ENCODE measurements at regions of chr15 and their contacts with region 1.

Region 1: GRCh38 chr15:89358755-89359439 is 24.3 kb upstream of the POLG start:
- DNase-seq: peak; percentile 58 to 92 (median 77)
- ATAC-seq: peak; percentile 89
- H3K4me3 ChIP-seq: peak overlapping the region; percentile 54
- H3K4me3 Mint-ChIP-seq: peak overlapping the region; percentile 80
- H3K27ac ChIP-seq: no peak overlapping the region
- H3K27ac Mint-ChIP-seq: no peak overlapping the region
- H3K4me1 ChIP-seq: peaks cover 37% of the 10 kb centered on the region
- H3K4me1 Mint-ChIP-seq: peaks cover 8% of the 10 kb centered on the region
- H3K27me3 ChIP-seq: peaks cover 82 to 92% of the 10 kb centered on the region in 2 experiments
- H3K27me3 Mint-ChIP-seq: peaks cover 83% of the 10 kb centered on the region
- CTCF ChIP-seq: peak; percentile 99

Region 2: DNA sequence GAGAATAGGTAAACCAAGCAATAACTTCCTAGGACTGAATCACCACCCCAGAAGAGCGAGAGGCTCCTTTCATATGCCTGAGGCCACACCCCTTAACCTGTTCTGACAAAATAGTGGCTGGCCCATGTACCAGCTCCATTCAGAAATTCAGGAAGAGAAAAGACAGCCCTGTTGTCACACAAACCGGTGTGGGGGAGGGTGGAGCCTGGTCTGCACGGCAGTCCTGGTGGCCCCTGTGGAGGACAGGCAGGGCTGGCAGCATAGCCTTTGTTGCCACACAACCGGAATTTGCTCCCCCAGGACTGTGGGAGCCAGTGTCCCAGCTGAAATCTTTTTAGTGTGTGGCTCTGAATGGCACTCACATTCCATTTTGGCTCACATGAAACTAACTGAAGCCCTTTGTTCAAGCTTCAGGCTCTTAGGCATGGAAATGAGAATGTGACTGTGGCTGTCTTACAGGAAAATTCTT is 161.4 kb before region 1 on chr15:
- CTCF ChIA-PET with region 1: no interaction called
- POLR2A ChIA-PET with region 1: no interaction called
- intact Hi-C with region 1: no loop called
- DNase-seq: no peak
- ATAC-seq: no peak
- H3K4me3 ChIP-seq: no peak overlapping the region
- H3K4me3 Mint-ChIP-seq: no peak overlapping the region
- H3K27ac ChIP-seq: no peak overlapping the region
- H3K27ac Mint-ChIP-seq: no peak overlapping the region
- H3K4me1 ChIP-seq: no peaks in the 10 kb centered on the region
- H3K4me1 Mint-ChIP-seq: no peaks in the 10 kb centered on the region
- H3K27me3 ChIP-seq: no peaks in the 10 kb centered on the region
- H3K27me3 Mint-ChIP-seq: no peaks in the 10 kb centered on the region
- CTCF ChIP-seq: no peak

Region 3: GRCh38 chr15:89299896-89300295 is 59.0 kb before region 1 on chr15:
- CTCF ChIA-PET with region 1: no interaction called
- POLR2A ChIA-PET with region 1: no interaction called
- intact Hi-C with region 1: no loop called
- DNase-seq: no peak
- ATAC-seq: no peak
- H3K4me3 ChIP-seq: no peak overlapping the region
- H3K4me3 Mint-ChIP-seq: no peak overlapping the region
- H3K27ac ChIP-seq: no peak overlapping the region
- H3K27ac Mint-ChIP-seq: no peak overlapping the region
- H3K4me1 ChIP-seq: no peaks in the 10 kb centered on the region
- H3K4me1 Mint-ChIP-seq: no peaks in the 10 kb centered on the region
- H3K27me3 ChIP-seq: no peaks in the 10 kb centered on the region
- H3K27me3 Mint-ChIP-seq: no peaks in the 10 kb centered on the region
- CTCF ChIP-seq: no peak

Region 4: DNA sequence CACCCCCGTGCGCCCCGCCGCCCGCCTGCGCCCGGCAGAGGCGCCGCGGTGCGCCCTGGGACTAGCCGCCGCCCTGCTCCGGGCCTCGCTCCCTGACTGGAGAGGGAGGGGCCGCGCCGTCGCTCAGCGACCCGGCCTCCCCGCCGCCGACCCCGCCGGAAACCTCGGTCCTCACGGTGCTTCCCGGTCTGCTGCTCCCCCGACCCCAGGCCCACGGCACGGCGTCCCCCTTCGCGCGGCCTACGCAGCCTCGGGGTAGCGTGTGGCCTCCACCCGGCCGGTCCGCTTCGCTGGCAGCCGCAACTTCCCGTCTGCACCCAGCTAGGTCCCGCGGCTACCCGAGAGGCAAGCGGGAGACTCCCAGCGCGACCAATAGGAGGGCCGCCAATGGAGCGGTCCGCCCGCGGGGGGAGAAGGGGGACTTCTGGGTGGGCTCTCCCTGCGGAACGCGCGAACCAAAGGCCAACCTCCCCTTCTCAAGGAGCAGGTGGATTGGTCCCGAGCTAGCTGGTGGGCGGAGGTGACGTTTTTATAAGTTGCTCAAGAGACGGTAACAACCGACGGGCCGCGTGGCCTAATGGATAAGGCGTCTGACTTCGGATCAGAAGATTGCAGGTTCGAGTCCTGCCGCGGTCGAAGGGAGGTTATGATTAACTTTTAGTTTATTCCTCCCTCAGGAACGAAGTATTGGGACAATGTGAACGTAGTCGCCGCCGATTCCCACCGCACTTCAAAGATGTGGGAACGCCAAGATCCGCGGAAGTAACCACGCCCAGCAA is 24.2 kb before region 1 on chr15 and contains the start of gene POLG:
- CTCF ChIA-PET with region 1: interaction called, 22 read pairs
- POLR2A ChIA-PET with region 1: interaction called, 9 read pairs
- intact Hi-C with region 1: loop called in 1 of 2 experiments (anchors 1 kb)
- DNase-seq: peak; percentile 98 to 100 (median 99)
- ATAC-seq: peak; percentile 91
- H3K4me3 ChIP-seq: peak within 1 kb of the TSS; percentile 92
- H3K4me3 Mint-ChIP-seq: peak within 1 kb of the TSS; percentile 96
- H3K27ac ChIP-seq: peak within 1 kb of the TSS; percentile 55 to 79
- H3K27ac Mint-ChIP-seq: peak within 1 kb of the TSS; percentile 100
- H3K4me1 ChIP-seq: peaks cover 54% of the 10 kb centered on the region
- H3K4me1 Mint-ChIP-seq: peaks cover 56% of the 10 kb centered on the region
- H3K27me3 ChIP-seq: no peaks in the 10 kb centered on the region
- H3K27me3 Mint-ChIP-seq: peaks cover 11% of the 10 kb centered on the region
- CTCF ChIP-seq: no peak
- total RNA-seq, gene POLG: 139 to 140 TPM

Region 5: DNA sequence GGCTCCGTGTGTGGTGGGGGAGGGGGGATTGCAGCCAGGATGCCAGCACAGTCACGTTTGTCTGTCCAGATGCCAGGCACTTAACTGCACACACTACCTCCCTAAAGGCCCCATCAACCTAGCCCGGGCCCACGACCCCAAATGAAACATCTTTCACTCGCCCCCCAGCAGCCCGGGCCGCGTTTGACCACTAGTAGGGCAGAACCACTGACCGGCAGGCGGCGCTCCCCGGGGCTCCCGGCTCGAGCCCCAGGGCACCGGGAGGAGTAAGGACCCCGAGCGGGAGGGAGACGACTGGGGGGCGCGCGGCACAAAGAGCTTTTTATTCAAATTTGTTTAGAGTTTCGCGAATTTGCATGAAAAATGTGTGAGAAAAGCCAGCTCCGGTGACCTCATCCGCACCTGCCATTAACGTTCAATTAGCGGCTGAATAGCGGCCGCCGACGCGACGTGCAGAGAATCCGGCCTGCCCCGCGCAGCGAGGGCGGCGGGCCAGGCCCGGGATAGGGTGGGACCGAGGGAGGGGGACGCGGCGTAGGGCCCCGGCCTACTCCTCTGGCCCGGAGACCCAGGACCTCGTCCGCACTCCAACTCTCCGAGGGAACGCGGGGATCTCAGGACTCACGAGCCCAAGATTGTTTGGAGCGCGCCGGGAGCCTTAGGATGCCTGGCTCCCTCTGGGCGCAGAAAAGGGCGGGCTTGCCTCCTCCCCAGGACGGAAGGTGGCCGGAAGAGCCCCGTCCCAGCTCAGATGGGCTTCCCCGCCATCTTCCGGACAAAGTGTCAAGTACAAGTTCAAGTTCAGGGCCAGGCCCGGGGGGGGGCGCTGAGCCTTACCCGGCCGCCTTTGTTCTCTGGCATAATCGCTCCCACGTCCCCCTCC is 40.6 kb after region 1 on chr15:
- CTCF ChIA-PET with region 1: interaction called, 4 read pairs
- POLR2A ChIA-PET with region 1: no interaction called
- intact Hi-C with region 1: loop called in 1 of 2 experiments (anchors 5 kb)
- DNase-seq: peak in 4 of 14 experiments; percentile 28 to 58 (median 44)
- ATAC-seq: peak; percentile 37
- H3K4me3 ChIP-seq: peak overlapping the region; percentile 51
- H3K4me3 Mint-ChIP-seq: peak overlapping the region; percentile 76
- H3K27ac ChIP-seq: no peak overlapping the region
- H3K27ac Mint-ChIP-seq: no peak overlapping the region
- H3K4me1 ChIP-seq: peaks cover 18% of the 10 kb centered on the region
- H3K4me1 Mint-ChIP-seq: peaks cover 5% of the 10 kb centered on the region
- H3K27me3 ChIP-seq: peaks cover 62 to 65% of the 10 kb centered on the region in 2 experiments
- H3K27me3 Mint-ChIP-seq: peaks cover 83% of the 10 kb centered on the region
- CTCF ChIP-seq: peak; percentile 14

Region 6: GRCh38 chr15:89416141-89416853 is 57.4 kb after region 1 on chr15:
- CTCF ChIA-PET with region 1: interaction called, 13 read pairs
- POLR2A ChIA-PET with region 1: no interaction called
- intact Hi-C with region 1: no loop called
- DNase-seq: peak; percentile 18 to 86 (median 52)
- ATAC-seq: peak; percentile 87
- H3K4me3 ChIP-seq: no peak overlapping the region
- H3K4me3 Mint-ChIP-seq: no peak overlapping the region
- H3K27ac ChIP-seq: no peak overlapping the region
- H3K27ac Mint-ChIP-seq: no peak overlapping the region
- H3K4me1 ChIP-seq: peaks cover 19% of the 10 kb centered on the region
- H3K4me1 Mint-ChIP-seq: peaks cover 16% of the 10 kb centered on the region
- H3K27me3 ChIP-seq: peaks cover 80 to 96% of the 10 kb centered on the region in 2 experiments
- H3K27me3 Mint-ChIP-seq: peaks cover 97% of the 10 kb centered on the region
- CTCF ChIP-seq: peak; percentile 74

Region 7: DNA sequence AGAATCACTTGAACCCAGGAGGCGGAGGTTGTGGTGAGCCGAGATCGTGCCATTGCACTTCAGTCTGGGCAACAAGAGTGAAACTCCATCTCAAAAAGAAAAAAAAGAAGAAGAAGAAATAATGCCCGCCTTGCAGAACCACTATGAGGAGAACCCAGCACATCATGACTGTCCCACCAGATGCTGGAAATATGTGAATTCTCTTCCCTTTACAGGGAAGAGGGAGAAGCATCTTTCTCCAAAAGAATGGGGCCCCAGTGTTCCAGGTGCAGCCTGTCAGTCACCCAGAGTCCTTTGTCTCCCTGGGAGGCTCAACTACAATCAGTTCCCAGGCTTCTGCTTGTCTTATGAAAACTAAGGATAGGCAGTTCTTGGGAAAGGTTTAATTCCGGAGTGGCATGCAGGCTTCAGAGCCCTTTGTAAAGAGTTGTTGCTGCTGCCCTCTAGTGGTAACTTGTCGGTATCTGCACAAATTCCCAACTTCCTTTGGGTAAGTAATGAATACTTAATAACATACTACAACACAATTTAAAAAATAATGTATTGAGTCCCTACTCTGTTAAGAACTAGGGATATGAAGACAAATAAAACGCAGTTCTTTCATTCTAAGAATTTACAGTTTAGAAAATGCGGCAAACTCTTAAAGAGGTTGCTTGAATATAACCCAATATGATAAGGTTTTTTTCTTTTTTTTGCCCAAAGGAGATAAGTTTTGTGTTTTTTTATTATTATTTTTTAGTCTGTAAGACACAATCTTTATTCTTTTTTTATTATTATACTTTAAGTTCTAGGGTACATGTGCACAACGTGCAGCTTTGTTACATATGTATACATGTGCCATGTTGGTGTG is 197.7 kb after region 1 on chr15:
- CTCF ChIA-PET with region 1: no interaction called
- POLR2A ChIA-PET with region 1: no interaction called
- intact Hi-C with region 1: loop called in 1 of 2 experiments (anchors 2 kb)
- DNase-seq: peak in 11 of 14 experiments; percentile 13 to 73 (median 30)
- ATAC-seq: no peak
- H3K4me3 ChIP-seq: no peak overlapping the region
- H3K4me3 Mint-ChIP-seq: no peak overlapping the region
- H3K27ac ChIP-seq: no peak overlapping the region
- H3K27ac Mint-ChIP-seq: no peak overlapping the region
- H3K4me1 ChIP-seq: no peaks in the 10 kb centered on the region
- H3K4me1 Mint-ChIP-seq: no peaks in the 10 kb centered on the region
- H3K27me3 ChIP-seq: peaks cover 3 to 13% of the 10 kb centered on the region in 2 experiments
- H3K27me3 Mint-ChIP-seq: peaks cover 17% of the 10 kb centered on the region
- CTCF ChIP-seq: peak; percentile 88

Region 8: GRCh38 chr15:91150502-91151160 is 1791.7 kb after region 1 on chr15:
- CTCF ChIA-PET with region 1: no interaction called
- POLR2A ChIA-PET with region 1: no interaction called
- intact Hi-C with region 1: no loop called
- DNase-seq: no peak
- ATAC-seq: no peak
- H3K4me3 ChIP-seq: no peak overlapping the region
- H3K4me3 Mint-ChIP-seq: no peak overlapping the region
- H3K27ac ChIP-seq: no peak overlapping the region
- H3K27ac Mint-ChIP-seq: no peak overlapping the region
- H3K4me1 ChIP-seq: no peaks in the 10 kb centered on the region
- H3K4me1 Mint-ChIP-seq: no peaks in the 10 kb centered on the region
- H3K27me3 ChIP-seq: peaks cover 18 to 35% of the 10 kb centered on the region in 2 experiments
- H3K27me3 Mint-ChIP-seq: peaks cover 85% of the 10 kb centered on the region
- CTCF ChIP-seq: no peak

Measured in CD4-positive, alpha-beta T cell (primary cell).